Tibial artery (tissue), 4 donors: ENCODE measurements at regions of chr6 and their contacts with region 1.

Region 1: DNA sequence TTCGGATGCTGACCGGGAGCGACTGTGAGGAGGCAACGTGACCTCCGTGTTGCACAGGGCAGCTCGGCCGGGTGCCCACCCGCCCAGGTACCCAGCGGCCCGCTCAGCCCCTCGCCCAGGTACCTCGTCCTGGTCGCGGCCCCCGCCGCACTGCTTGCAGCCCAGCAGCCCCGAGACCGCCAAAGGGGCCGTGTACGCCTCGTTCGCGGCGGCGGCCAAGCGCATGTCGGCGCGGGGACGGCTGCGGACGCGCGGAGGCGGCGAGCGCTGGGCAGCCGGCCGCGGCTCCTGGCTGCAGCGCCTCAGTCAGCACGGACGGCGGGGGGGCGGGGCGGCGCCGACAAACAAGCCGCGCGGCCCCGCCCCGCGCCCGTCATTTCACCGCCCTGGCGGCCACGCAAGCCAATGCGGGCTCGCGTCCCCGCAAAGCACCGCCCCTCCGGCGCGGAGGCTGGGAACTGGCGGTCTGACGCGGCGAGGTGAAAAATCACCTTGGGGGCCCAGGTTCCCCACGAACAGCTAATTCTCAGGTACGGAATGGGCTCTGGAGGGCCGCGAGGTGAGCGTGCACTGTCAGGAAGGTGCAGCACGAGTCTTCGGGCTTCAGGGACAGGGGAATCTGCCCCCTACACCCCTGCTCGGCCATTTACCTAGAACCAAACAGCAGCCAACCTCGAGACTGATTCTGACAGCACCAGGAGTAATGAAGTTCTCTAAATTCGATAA is 85.2 kb downstream of the SESN1 start:
- DNase-seq: peak; percentile 96
- H3K4me3 ChIP-seq: peak overlapping the region; percentile 65 to 87
- H3K27ac ChIP-seq: peak overlapping the region; percentile 81 to 86
- H3K4me1 ChIP-seq: peaks cover 0 to 48% (median 19%) of the 10 kb centered on the region in 4 donors
- H3K27me3 ChIP-seq: no peaks in the 10 kb centered on the region
- CTCF ChIP-seq: peak; percentile 41 to 66

Region 2: GRCh38 chr6:108558372-108559096 is 450.9 kb before region 1 on chr6:
- intact Hi-C with region 1: loop called (anchors 10 kb)
- DNase-seq: peak; percentile 98 to 99
- H3K4me3 ChIP-seq: peak overlapping the region; percentile 86 to 97
- H3K27ac ChIP-seq: peak overlapping the region; percentile 97 to 99
- H3K4me1 ChIP-seq: peaks cover 0 to 31% (median 16%) of the 10 kb centered on the region in 4 donors
- H3K27me3 ChIP-seq: no peaks in the 10 kb centered on the region
- CTCF ChIP-seq: no peak

Region 3: GRCh38 chr6:108947114-108947854 is 62.1 kb before region 1 on chr6:
- intact Hi-C with region 1: loop called (anchors 5 kb)
- DNase-seq: peak in 1 of 2 donors; percentile 66
- H3K4me3 ChIP-seq: peak overlapping the region in 1 of 2 donors; percentile 6
- H3K27ac ChIP-seq: peak overlapping the region; percentile 81 to 84
- H3K4me1 ChIP-seq: peaks cover 0 to 59% (median 45%) of the 10 kb centered on the region in 4 donors
- H3K27me3 ChIP-seq: no peaks in the 10 kb centered on the region
- CTCF ChIP-seq: no peak

Region 4: DNA sequence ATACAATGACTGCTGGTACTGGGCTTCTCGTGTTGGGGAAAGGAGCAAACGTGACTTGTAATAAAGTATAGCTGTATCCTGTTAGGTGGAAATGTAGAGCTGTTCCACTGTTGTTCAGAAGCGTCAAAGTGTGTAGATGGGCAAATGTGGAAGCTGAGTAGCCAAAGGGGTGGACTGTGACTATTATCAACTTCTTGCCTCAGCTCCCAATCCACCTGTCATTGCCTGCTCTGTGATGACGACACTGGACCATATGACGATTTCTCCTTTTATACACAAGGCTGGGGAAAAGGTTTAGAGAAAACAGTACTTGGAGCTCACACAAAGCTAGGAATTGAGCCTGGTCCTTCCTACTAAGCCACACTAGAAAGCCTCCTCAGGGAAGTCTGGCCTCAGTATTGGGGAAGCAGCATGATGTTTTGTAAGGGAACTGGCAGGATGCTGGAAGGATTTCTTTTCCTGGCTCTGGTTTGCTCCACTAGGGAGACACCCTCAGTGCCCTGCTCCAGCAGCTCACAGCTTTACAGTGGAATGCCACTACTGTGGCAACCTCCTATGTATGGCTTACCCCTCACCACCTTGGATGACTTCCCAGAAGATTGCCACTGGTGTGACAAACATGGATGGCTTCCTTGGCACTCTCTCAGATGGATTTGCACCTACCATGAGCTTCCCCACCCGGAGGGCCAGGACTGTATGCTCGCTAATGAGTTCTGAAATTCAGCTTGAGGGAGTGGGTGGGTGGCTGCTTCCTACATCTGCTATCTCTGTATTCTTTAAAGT is 352.9 kb after region 1 on chr6:
- intact Hi-C with region 1: no loop called
- DNase-seq: no peak
- H3K4me3 ChIP-seq: no peak overlapping the region
- H3K27ac ChIP-seq: no peak overlapping the region
- H3K4me1 ChIP-seq: no peaks in the 10 kb centered on the region
- H3K27me3 ChIP-seq: no peaks in the 10 kb centered on the region
- CTCF ChIP-seq: no peak